Tibial artery (tissue), 4 donors: ENCODE measurements at regions of chr16 and their contacts with region 1.

Region 1: DNA sequence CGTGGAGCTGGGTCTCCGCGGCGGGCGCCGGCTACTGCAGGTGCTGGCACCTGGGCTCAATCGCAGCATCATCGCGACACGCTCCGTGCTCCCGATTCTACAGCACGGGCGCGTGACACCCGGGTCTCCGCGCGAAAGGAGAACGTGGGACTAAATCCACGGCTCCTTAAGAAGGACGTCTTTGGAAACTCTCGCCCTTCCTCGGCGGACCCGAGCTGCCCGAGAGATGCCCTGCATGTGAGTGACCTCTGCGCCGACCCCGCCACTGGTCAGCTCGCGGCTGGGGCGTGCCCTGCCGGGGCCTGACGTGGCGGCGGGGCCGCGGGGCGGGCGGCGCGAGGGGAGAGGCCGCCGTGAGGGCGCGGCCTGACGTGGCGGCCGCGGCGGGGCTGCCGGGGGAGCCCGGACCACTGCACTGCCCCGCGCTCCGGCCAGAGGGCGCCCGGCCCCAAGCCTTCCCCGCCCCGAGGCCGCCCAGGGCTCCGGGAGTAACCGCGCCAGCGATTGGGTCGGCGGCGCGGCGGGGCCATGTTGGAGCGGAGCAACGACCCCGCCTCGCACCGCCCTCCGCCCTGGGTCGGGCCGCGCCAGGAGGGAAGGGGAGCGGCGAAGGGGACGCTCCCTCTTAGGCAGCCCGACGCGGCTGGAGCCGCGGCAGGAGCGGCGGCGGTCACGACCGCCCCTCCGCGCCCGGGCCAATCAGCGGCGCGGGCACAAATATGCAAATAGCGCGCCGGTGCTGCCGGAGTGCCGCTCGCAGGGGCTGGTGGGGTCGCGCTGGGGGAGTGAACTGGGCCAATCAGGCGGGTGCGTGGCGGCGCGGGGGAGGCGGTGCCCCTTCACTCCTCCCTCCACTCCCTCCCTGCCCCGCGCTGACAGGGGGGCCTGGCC is 75.6 kb downstream of the CHD9 start:
- DNase-seq: peak; percentile 96 to 99
- H3K4me3 ChIP-seq: peak overlapping the region; percentile 67 to 76
- H3K27ac ChIP-seq: peak overlapping the region; percentile 87 to 88
- H3K4me1 ChIP-seq: peaks cover 0 to 40% (median 22%) of the 10 kb centered on the region in 4 donors
- H3K27me3 ChIP-seq: no peaks in the 10 kb centered on the region
- CTCF ChIP-seq: peak; percentile 57 to 91

Region 2: DNA sequence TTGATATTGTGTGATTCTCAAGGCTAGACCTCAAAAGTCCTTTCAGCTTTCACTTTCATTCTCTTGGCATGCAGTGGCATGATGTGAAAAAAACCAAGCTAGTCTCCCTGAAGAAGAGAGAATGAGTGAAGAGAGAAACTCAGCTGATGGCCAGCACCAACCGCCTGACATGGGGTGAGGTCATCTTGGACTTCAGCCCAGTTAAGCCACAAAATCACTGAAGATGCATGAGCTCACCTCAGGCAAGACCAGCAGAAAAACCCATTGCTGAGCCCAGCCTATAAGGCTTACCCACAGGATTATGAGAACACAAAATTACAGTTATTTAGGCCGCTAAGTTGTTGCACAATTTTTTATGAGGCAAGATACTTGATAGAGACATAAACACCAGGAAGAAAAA is 1080.0 kb before region 1 on chr16:
- intact Hi-C with region 1: no loop called
- DNase-seq: no peak
- H3K4me3 ChIP-seq: no peak overlapping the region
- H3K27ac ChIP-seq: no peak overlapping the region
- H3K4me1 ChIP-seq: no peaks in the 10 kb centered on the region
- H3K27me3 ChIP-seq: no peaks in the 10 kb centered on the region
- CTCF ChIP-seq: no peak

Region 3: DNA sequence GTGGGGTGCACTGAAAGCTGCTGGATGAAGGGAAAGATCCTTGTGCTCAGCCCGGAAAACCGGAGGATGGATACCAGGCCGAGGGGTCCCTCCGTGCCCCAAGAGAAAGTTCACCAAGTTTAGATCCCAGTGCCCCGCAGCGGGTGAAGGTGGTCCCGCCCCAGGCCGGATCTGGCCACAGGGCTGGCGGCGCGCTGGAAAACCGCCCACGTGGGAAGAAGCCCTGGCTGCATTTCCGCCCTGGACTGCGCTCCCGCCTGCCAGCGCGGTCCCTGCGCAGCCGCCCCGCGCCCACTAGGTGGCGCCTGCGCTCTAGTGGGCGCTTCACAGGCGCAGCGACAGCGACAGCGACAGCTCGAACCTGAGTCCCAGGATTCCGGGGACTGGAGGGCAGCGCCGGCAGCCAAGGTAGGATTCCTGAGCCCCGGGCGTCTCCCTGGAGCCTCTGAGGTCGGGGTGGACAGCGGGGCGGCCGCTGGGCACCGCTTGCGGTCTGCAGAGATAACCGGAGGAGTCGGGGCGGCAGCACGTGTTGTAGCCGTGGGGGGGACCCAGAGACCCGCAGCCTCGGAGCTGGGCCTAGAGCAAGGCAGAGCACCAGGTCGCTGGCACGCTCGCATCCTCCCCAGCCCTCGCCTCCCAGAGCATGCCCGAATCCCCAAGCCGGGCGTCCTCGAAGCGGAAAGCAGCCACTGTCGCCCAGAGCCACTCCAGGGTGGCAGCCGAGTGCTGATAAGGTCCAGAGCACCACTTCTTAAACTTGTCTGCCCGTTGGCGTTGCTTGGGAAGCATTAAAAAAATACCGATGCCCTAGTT is 75.5 kb before region 1 on chr16 and contains the start of gene CHD9:
- intact Hi-C with region 1: loop called (anchors 2 kb)
- DNase-seq: peak; percentile 80 to 90
- H3K4me3 ChIP-seq: peak within 1 kb of the TSS; percentile 59 to 68
- H3K27ac ChIP-seq: peak within 1 kb of the TSS; percentile 76 to 88
- H3K4me1 ChIP-seq: peaks cover 0 to 36% (median 12%) of the 10 kb centered on the region in 4 donors
- H3K27me3 ChIP-seq: no peaks in the 10 kb centered on the region
- CTCF ChIP-seq: peak; percentile 99 to 100

Region 4: GRCh38 chr16:53091466-53092211 is 38.8 kb before region 1 on chr16:
- intact Hi-C with region 1: loop called (anchors 2 kb)
- DNase-seq: peak; percentile 74 to 76
- H3K4me3 ChIP-seq: peak overlapping the region in 1 of 2 donors; percentile 6
- H3K27ac ChIP-seq: peak overlapping the region; percentile 78 to 86
- H3K4me1 ChIP-seq: peaks cover 0 to 62% (median 51%) of the 10 kb centered on the region in 4 donors
- H3K27me3 ChIP-seq: no peaks in the 10 kb centered on the region
- CTCF ChIP-seq: no peak

Region 5: DNA sequence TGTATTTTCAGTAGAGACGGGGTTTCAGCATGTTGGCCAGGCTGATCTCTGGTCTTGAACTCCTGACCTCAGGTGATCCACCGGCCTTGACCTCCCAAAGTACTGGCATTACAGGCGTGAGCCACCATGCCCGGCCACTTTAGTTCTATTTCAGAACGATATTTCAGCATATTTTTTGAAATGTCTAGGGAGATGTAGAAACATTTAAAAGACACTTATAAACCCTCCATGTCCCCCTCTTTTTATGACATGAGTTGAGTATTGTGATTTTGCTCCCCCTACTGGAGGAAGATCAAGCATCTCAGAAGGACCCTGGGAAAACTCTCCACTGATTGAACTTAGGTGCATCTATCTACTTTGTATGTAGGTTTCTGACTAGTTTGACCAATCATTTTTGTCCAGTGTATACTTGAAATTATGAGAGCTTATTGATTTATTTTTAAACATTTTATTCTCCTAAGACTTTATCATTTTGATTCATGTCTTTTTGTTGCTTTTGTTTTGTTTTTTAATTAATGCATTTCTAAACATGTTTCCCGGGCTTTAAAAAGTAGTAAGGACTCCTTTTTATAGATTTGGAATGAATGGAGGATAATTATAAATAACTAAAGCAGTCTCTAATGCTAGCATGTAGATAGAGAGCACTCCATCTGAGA is 29.5 kb after region 1 on chr16:
- intact Hi-C with region 1: loop called (anchors 2 kb)
- DNase-seq: no peak
- H3K4me3 ChIP-seq: no peak overlapping the region
- H3K27ac ChIP-seq: peak overlapping the region in 1 of 2 donors; percentile 6
- H3K4me1 ChIP-seq: peaks cover 0 to 21% (median 0%) of the 10 kb centered on the region in 4 donors
- H3K27me3 ChIP-seq: no peaks in the 10 kb centered on the region
- CTCF ChIP-seq: peak; percentile 63 to 69